ENCODE measurements at regions of chr11 and their contacts with region 1.

Region 1: DNA sequence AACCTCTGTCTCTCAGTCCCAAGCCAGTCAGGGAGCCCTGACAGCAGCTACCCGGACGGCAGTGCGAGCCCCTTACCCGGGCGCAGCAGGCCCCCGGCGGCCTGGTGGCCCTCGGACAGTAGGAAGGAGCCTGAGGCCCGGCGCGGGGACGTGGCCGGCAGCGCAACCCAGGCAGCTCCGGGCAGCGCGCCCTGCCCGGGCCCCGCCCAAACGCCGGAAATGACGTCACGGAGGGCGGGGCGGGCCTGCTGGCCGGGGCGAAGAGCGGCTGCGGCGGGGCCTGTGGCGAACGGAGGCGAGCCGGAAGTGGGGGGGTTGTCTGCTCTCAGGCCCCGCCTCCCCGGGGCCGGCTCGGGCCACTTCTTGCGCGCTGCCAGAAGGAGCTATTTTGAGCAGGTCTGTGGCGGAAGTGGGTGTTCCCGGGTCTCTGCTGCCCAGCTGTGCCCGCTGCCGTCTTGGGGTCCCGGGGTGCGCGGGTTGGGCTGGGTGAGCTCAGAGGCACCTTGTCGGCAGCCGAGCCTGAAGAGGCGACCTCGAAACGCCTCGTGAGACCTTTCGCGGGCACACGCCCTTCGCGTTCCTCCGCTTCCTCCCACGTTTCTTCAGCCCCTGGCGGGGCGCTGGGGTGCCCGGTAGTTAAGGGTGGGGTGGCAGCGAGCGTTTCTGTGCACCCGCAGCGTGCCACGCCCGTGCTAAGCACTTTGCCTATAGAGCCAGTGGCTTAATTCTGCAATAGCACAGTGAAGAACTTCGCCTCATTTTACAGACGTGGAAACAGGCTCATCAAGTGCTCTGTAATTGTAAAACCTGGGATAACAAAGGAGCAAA is at the start of gene C11orf24:
- DNase-seq: peak; percentile 97 to 100
- H3K4me3 ChIP-seq: peak within 1 kb of the TSS; percentile 93
- H3K4me3 Mint-ChIP-seq: peak within 1 kb of the TSS; percentile 100
- H3K27ac Mint-ChIP-seq: peak within 1 kb of the TSS; percentile 98
- H3K4me1 ChIP-seq: peaks cover 33% of the 10 kb centered on the region
- H3K4me1 Mint-ChIP-seq: peaks cover 28% of the 10 kb centered on the region
- H3K27me3 ChIP-seq: no peaks in the 10 kb centered on the region
- H3K27me3 Mint-ChIP-seq: no peaks in the 10 kb centered on the region
- CTCF ChIP-seq: peak in 1 of 2 experiments; percentile 10
- total RNA-seq, gene C11orf24: 79.8 and 83.2 TPM in 2 replicates

Region 2: GRCh38 chr11:68257475-68258362 is 14.3 kb before region 1 on chr11:
- CTCF ChIA-PET with region 1: interaction called, 25 read pairs
- POLR2A ChIA-PET with region 1: interaction called, 14 read pairs
- intact Hi-C with region 1: loop called (anchors 1 kb)
- DNase-seq: peak; percentile 97 to 98
- H3K4me3 ChIP-seq: no peak overlapping the region
- H3K4me3 Mint-ChIP-seq: no peak overlapping the region
- H3K27ac Mint-ChIP-seq: peak overlapping the region; percentile 40
- H3K4me1 ChIP-seq: peaks cover 23% of the 10 kb centered on the region
- H3K4me1 Mint-ChIP-seq: peaks cover 22% of the 10 kb centered on the region
- H3K27me3 ChIP-seq: no peaks in the 10 kb centered on the region
- H3K27me3 Mint-ChIP-seq: no peaks in the 10 kb centered on the region
- CTCF ChIP-seq: peak; percentile 95 to 96

Region 3: DNA sequence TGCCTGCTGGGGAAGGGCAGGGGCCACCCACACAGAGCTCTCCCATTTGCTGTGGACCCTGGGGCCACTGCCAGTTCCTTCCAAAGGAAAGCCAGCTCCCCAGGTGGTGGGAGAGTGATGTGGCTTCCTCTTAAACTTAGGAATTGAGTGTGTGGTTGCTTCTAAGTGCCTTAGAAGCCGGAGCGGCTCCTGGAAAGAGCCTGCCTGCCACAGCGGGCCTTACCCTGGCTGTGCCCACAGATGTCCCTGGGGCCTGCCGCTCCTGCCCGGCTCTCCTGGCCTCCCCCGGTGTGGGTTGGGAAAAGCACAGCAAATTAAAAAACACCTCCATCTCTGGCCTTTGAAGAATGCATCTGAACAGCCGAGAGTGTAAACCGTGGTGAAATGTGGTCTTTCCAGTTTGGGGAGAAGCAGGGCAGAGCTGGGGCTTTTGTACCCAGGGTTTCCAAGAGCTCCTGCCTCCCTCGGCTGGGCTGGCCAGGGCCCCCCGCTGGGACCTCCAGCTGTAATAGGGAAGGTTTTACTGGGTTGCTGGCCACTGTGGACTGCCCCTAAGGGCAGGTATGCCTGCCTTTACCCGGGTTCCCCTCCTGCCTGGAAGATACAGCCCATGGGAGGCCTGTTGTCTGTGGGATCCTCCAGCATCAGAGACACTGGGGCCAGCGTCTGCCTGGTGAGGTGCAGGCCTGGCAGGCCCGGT is 70.6 kb after region 1 on chr11:
- CTCF ChIA-PET with region 1: interaction called, 8 read pairs
- POLR2A ChIA-PET with region 1: interaction called, 18 read pairs
- intact Hi-C with region 1: loop called (anchors 2 kb)
- DNase-seq: peak; percentile 95
- H3K4me3 ChIP-seq: no peak overlapping the region
- H3K4me3 Mint-ChIP-seq: peak overlapping the region; percentile 43
- H3K27ac Mint-ChIP-seq: peak overlapping the region; percentile 90
- H3K4me1 ChIP-seq: peaks cover 66% of the 10 kb centered on the region
- H3K4me1 Mint-ChIP-seq: peaks cover 67% of the 10 kb centered on the region
- H3K27me3 ChIP-seq: no peaks in the 10 kb centered on the region
- H3K27me3 Mint-ChIP-seq: no peaks in the 10 kb centered on the region
- CTCF ChIP-seq: no peak

Region 4: GRCh38 chr11:68503251-68503687 is 231.3 kb after region 1 on chr11:
- CTCF ChIA-PET with region 1: no interaction called
- POLR2A ChIA-PET with region 1: no interaction called
- intact Hi-C with region 1: no loop called
- DNase-seq: no peak
- H3K4me3 ChIP-seq: no peak overlapping the region
- H3K4me3 Mint-ChIP-seq: no peak overlapping the region
- H3K27ac Mint-ChIP-seq: peak overlapping the region; percentile 0
- H3K4me1 ChIP-seq: no peaks in the 10 kb centered on the region; the same call in none of the 2 replicates
- H3K4me1 Mint-ChIP-seq: peaks cover 25% of the 10 kb centered on the region
- H3K27me3 ChIP-seq: no peaks in the 10 kb centered on the region
- H3K27me3 Mint-ChIP-seq: no peaks in the 10 kb centered on the region
- CTCF ChIP-seq: no peak

Measured in Caco-2 (cell line).